ENCODE measurements at regions of chr12 and their contacts with region 1.

Region 1: GRCh38 chr12:103571286-103571685 is 15.8 kb upstream of the STAB2 start:
- DNase-seq: no peak
- H3K4me3 ChIP-seq: no peak overlapping the region
- H3K27ac ChIP-seq: no peak overlapping the region
- H3K4me1 ChIP-seq: no peaks in the 10 kb centered on the region
- H3K27me3 ChIP-seq: peaks cover 7% of the 10 kb centered on the region
- CTCF ChIP-seq: no peak
- POLR2A ChIP-seq: no peak

Region 2: DNA sequence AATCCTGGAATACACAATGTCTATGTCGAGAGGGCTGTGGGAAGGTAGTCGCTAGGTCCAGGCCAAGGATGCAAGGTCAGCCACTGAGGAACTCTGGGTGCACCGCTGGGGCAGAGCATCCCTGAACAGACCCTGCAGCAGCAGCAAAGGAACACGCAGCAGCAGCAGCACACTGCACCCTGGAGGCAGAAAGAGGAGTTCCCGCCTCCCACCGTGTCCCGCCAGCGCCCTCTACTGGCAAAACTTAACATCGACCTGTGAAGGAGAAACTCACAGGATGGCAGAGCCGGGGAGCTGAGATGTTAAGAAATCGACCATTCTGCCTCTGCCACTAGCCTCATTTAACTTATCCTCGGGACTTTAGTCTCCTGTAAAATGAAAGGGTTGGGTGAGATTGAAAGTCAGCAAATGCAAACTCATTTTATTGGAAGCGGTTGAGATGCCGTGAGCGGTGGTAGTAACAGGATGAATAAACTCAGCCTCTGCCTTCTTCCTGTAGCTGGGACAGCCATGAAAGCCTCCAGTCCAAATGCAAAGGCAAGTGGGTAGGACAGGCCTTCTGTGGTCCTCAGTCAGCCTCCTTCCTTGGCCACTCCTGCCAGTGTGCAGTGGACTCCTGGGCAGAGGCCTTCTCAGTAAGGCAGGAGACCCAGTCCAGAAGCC is 61.4 kb after region 1 on chr12:
- intact Hi-C with region 1: loop called in 1 of 2 experiments (anchors 10 kb)
- DNase-seq: peak; percentile 56 to 77 (median 73)
- H3K4me3 ChIP-seq: no peak overlapping the region
- H3K27ac ChIP-seq: no peak overlapping the region
- H3K4me1 ChIP-seq: no peaks in the 10 kb centered on the region
- H3K27me3 ChIP-seq: no peaks in the 10 kb centered on the region
- CTCF ChIP-seq: peak; percentile 53 to 86 (median 75)
- POLR2A ChIP-seq: no peak